ENCODE measurements at regions of chr5 and their contacts with region 1.

Region 1: GRCh38 chr5:138449501-138450239 is 10.8 kb downstream of the REEP2 start:
- DNase-seq: peak; percentile 74
- H3K4me3 Mint-ChIP-seq: peak overlapping the region; percentile 24
- H3K27ac Mint-ChIP-seq: peak overlapping the region; percentile 7
- H3K4me1 Mint-ChIP-seq: peaks cover 6% of the 10 kb centered on the region
- H3K27me3 Mint-ChIP-seq: peaks cover 6% of the 10 kb centered on the region

Region 2: GRCh38 chr5:138438724-138439476 is 10.8 kb before region 1 on chr5 and contains the start of gene REEP2:
- intact Hi-C with region 1: loop called (anchors 1 kb)
- DNase-seq: peak; percentile 53
- H3K4me3 Mint-ChIP-seq: peak within 1 kb of the TSS; percentile 77
- H3K27ac Mint-ChIP-seq: peak within 1 kb of the TSS; percentile 67
- H3K4me1 Mint-ChIP-seq: peaks cover 13% of the 10 kb centered on the region
- H3K27me3 Mint-ChIP-seq: peaks cover 6% of the 10 kb centered on the region
- total RNA-seq, gene REEP2: 5.1 and 5.4 TPM in 2 replicates

Region 3: DNA sequence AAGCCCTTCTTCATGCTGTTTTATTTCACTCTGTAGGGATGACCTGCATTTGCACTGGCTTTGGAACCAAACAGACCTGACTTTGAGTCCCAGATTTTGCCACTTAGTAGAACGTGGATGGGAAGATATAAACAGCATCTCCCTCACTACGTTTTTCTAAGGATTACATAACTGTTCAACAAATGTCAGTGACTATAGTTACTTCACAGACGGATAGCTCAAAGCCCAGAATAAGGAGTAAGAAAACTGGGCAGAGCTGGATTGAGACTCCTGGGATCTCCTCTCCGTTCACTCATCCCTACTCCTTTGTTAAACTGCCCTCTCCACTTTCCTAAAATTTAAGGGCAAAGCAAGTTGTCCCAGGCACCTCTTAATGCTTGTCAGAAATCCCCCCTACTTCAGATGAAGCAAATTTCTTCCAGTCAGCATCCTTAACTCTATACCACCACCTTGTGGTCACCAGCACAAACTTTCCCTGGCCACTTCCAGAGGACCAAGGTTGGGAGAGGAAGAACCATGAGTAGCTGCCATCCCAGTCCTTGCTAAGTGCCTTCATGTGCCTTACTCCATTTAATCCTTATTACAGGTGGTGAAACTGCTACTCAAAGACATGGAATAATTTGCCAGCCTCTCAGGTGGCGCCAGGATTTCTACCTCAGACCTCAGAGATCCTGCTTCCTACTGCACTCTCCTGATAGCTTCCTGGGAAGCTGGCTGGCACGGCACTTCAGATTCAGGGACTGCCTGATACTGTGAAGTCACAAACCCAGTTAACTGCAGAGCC is 54.0 kb after region 1 on chr5:
- intact Hi-C with region 1: loop called (anchors 1 kb)
- DNase-seq: no peak
- H3K4me3 Mint-ChIP-seq: no peak overlapping the region
- H3K27ac Mint-ChIP-seq: no peak overlapping the region
- H3K4me1 Mint-ChIP-seq: peaks cover 5% of the 10 kb centered on the region
- H3K27me3 Mint-ChIP-seq: no peaks in the 10 kb centered on the region

Region 4: GRCh38 chr5:139513852-139514485 is 1064.3 kb after region 1 on chr5:
- intact Hi-C with region 1: no loop called
- DNase-seq: no peak
- H3K4me3 Mint-ChIP-seq: no peak overlapping the region
- H3K27ac Mint-ChIP-seq: no peak overlapping the region
- H3K4me1 Mint-ChIP-seq: peaks cover 67% of the 10 kb centered on the region
- H3K27me3 Mint-ChIP-seq: no peaks in the 10 kb centered on the region

Measured in activated T-helper 1 cell treated with anti-CD3 and anti-CD28 coated beads, Interleukin-12 subunit alpha, Interleukin-12 subunit beta, Interleukin-2, Interleukin-4 antibody, amounts not matched to agents 30 ng/mL and 10 ng/mL and 1 ng/mL, durations not matched to agents 14 hours and 24 hours and 36 hours (primary cell).